ENCODE measurements at regions of chr20 and their contacts with region 1.

Region 1: DNA sequence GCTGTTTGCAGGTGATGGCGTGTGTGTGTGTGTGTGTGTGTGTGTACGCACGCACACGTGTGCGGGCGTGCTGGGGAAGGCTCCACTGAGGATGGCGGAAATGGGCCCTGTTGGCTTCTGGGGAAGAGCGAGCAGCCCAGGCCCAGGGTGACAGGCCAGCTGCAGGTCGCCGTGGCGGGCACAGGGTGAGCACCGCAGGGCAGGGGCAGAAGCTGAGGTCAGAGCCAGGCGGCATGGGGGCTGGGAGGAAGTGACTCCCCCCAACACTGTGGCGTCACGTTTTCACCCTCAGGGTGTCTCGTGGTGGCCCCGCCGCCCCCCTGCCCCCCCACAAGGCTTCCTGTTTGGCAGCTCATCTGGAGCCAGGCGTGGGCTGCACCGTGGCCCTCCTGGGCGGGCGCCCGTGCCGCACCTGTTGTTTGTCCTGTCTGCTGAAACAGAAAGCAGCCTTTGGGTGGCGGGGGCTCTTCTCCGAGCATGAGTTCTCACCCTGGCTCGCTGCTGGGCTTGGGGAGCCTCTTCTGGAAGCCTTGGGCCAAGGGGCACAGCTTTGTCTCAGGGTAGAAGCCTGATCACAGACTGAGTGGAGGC is 7.1 kb downstream of the RBM38 start:
- DNase-seq: peak; percentile 83 to 97 (median 94)
- ATAC-seq: peak; percentile 71
- H3K4me3 ChIP-seq: peak overlapping the region; percentile 54
- H3K4me3 Mint-ChIP-seq: peak overlapping the region; percentile 85
- H3K27ac ChIP-seq: peak overlapping the region; percentile 90 to 99
- H3K27ac Mint-ChIP-seq: peak overlapping the region; percentile 96
- H3K4me1 ChIP-seq: peaks cover 100% of the 10 kb centered on the region
- H3K4me1 Mint-ChIP-seq: peaks cover 95% of the 10 kb centered on the region
- H3K27me3 ChIP-seq: no peaks in the 10 kb centered on the region
- H3K27me3 Mint-ChIP-seq: peaks cover 4% of the 10 kb centered on the region
- CTCF ChIP-seq: no peak

Region 2: GRCh38 chr20:57383447-57384347 is 14.6 kb before region 1 on chr20:
- CTCF ChIA-PET with region 1: interaction called, 14 read pairs
- POLR2A ChIA-PET with region 1: interaction called, 132 read pairs
- intact Hi-C with region 1: no loop called
- DNase-seq: peak in 1 of 14 experiments; percentile 30
- ATAC-seq: no peak
- H3K4me3 ChIP-seq: no peak overlapping the region
- H3K4me3 Mint-ChIP-seq: no peak overlapping the region
- H3K27ac ChIP-seq: no peak overlapping the region
- H3K27ac Mint-ChIP-seq: no peak overlapping the region
- H3K4me1 ChIP-seq: peaks cover 16% of the 10 kb centered on the region
- H3K4me1 Mint-ChIP-seq: peaks cover 23% of the 10 kb centered on the region
- H3K27me3 ChIP-seq: no peaks in the 10 kb centered on the region
- H3K27me3 Mint-ChIP-seq: no peaks in the 10 kb centered on the region
- CTCF ChIP-seq: no peak

Region 3: GRCh38 chr20:57425150-57426013 is 27.1 kb after region 1 on chr20:
- CTCF ChIA-PET with region 1: no interaction called
- POLR2A ChIA-PET with region 1: interaction called, 16 read pairs
- intact Hi-C with region 1: no loop called
- DNase-seq: no peak
- ATAC-seq: no peak
- H3K4me3 ChIP-seq: no peak overlapping the region
- H3K4me3 Mint-ChIP-seq: no peak overlapping the region
- H3K27ac ChIP-seq: no peak overlapping the region
- H3K27ac Mint-ChIP-seq: no peak overlapping the region
- H3K4me1 ChIP-seq: peaks cover 41% of the 10 kb centered on the region
- H3K4me1 Mint-ChIP-seq: peaks cover 38% of the 10 kb centered on the region
- H3K27me3 ChIP-seq: no peaks in the 10 kb centered on the region
- H3K27me3 Mint-ChIP-seq: no peaks in the 10 kb centered on the region
- CTCF ChIP-seq: no peak

Region 4: DNA sequence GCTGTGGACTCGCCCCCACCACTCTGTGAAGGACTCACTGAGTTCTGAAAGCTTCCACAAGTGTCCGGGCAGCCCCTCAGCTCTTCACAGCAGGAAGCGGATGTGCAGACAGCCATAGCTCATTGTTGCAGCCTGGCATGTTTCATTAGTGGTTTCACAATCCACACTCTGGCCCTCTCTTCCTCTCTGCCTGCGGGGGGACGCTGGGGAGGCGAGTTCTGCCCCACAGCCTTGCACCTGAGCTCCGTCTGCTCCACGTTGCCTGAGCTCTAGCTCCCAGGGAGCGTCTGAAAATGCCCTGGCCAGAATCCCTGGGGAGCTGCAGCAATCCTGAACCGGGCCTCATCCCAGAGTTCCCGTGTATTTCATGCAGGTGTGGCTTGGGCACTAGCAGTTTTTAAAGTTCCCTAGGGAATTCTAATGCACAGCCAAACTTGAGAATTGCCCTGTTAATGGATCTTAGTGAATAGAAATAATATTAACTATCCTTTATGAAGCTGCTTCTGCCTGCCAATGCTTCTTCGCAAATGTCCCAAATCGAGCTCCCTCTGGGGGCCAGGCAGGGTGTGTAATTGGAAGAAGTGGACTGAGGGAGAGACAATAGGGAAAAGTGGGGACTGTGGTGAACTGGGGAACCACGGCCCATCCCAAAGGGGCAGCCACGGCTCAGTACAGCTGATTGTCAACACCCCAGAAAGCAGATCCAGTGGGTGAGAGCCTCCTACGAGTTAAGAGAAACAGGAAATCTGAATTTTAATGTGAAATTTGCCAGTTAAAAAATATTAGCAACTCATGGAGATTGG is 75.1 kb after region 1 on chr20:
- CTCF ChIA-PET with region 1: no interaction called
- POLR2A ChIA-PET with region 1: interaction called, 19 read pairs
- intact Hi-C with region 1: no loop called
- DNase-seq: peak in 6 of 14 experiments; percentile 7 to 53 (median 44)
- ATAC-seq: peak; percentile 48
- H3K4me3 ChIP-seq: no peak overlapping the region
- H3K4me3 Mint-ChIP-seq: no peak overlapping the region
- H3K27ac ChIP-seq: no peak overlapping the region
- H3K27ac Mint-ChIP-seq: peak overlapping the region; percentile 7
- H3K4me1 ChIP-seq: peaks cover 30% of the 10 kb centered on the region
- H3K4me1 Mint-ChIP-seq: peaks cover 35% of the 10 kb centered on the region
- H3K27me3 ChIP-seq: no peaks in the 10 kb centered on the region
- H3K27me3 Mint-ChIP-seq: no peaks in the 10 kb centered on the region
- CTCF ChIP-seq: no peak

Region 5: GRCh38 chr20:57622579-57623377 is 224.5 kb after region 1 on chr20:
- CTCF ChIA-PET with region 1: no interaction called
- POLR2A ChIA-PET with region 1: interaction called, 15 read pairs
- intact Hi-C with region 1: no loop called
- DNase-seq: peak; percentile 65 to 85 (median 74)
- ATAC-seq: peak; percentile 53
- H3K4me3 ChIP-seq: no peak overlapping the region
- H3K4me3 Mint-ChIP-seq: peak overlapping the region; percentile 87
- H3K27ac ChIP-seq: no peak overlapping the region
- H3K27ac Mint-ChIP-seq: peak overlapping the region; percentile 84
- H3K4me1 ChIP-seq: peaks cover 71% of the 10 kb centered on the region
- H3K4me1 Mint-ChIP-seq: peaks cover 88% of the 10 kb centered on the region
- H3K27me3 ChIP-seq: no peaks in the 10 kb centered on the region
- H3K27me3 Mint-ChIP-seq: no peaks in the 10 kb centered on the region
- CTCF ChIP-seq: peak; percentile 73

Region 6: GRCh38 chr20:57704245-57705009 is 306.1 kb after region 1 on chr20:
- CTCF ChIA-PET with region 1: no interaction called
- POLR2A ChIA-PET with region 1: no interaction called
- intact Hi-C with region 1: no loop called
- DNase-seq: no peak
- ATAC-seq: no peak
- H3K4me3 ChIP-seq: no peak overlapping the region
- H3K4me3 Mint-ChIP-seq: peak overlapping the region; percentile 25
- H3K27ac ChIP-seq: no peak overlapping the region
- H3K27ac Mint-ChIP-seq: peak overlapping the region; percentile 27
- H3K4me1 ChIP-seq: peaks cover 13% of the 10 kb centered on the region
- H3K4me1 Mint-ChIP-seq: peaks cover 29% of the 10 kb centered on the region
- H3K27me3 ChIP-seq: no peaks in the 10 kb centered on the region
- H3K27me3 Mint-ChIP-seq: no peaks in the 10 kb centered on the region
- CTCF ChIP-seq: no peak

Region 7: GRCh38 chr20:58309575-58310290 is 911.4 kb after region 1 on chr20 and contains the start of gene RAB22A:
- CTCF ChIA-PET with region 1: no interaction called
- POLR2A ChIA-PET with region 1: interaction called, 4 read pairs
- intact Hi-C with region 1: loop called (anchors 5 kb)
- DNase-seq: peak; percentile 62 to 95 (median 80)
- ATAC-seq: peak; percentile 34
- H3K4me3 ChIP-seq: peak within 1 kb of the TSS; percentile 77
- H3K4me3 Mint-ChIP-seq: peak within 1 kb of the TSS; percentile 97
- H3K27ac ChIP-seq: peak within 1 kb of the TSS; percentile 88 to 89
- H3K27ac Mint-ChIP-seq: peak within 1 kb of the TSS; percentile 98
- H3K4me1 ChIP-seq: peaks cover 58% of the 10 kb centered on the region
- H3K4me1 Mint-ChIP-seq: peaks cover 64% of the 10 kb centered on the region
- H3K27me3 ChIP-seq: no peaks in the 10 kb centered on the region
- H3K27me3 Mint-ChIP-seq: no peaks in the 10 kb centered on the region
- CTCF ChIP-seq: no peak
- total RNA-seq, gene RAB22A: 16.5 to 17.2 TPM